ENCODE measurements at regions of chr7 and their contacts with region 1.

Region 1: GRCh38 chr7:120987683-120988590 is 574 bp upstream of the CPED1 start:
- DNase-seq: peak; percentile 77
- H3K4me3 Mint-ChIP-seq: peak overlapping the region; percentile 81
- H3K27ac Mint-ChIP-seq: no peak overlapping the region
- H3K4me1 Mint-ChIP-seq: peaks cover 20% of the 10 kb centered on the region
- H3K27me3 Mint-ChIP-seq: peaks cover 53% of the 10 kb centered on the region

Region 2: DNA sequence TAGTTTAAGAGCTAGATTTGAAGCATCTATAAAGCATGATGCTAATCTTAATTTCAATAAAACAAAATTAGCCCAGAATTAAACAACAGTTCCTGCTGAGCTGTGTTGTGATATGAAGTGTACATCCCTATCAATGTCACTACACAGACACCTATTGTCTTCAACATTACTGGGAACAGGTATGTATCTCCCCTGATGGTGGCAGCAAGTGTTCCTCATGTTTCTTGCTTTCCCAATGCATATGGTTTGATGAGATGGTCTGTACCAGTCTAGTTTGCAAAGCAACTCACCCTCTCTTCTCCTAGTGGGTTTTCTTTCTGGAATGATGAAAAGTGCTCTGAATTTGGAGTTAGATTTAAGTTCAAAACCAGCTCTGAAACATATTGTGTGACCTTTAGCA is 168.1 kb before region 1 on chr7:
- intact Hi-C with region 1: no loop called
- DNase-seq: no peak
- H3K4me3 Mint-ChIP-seq: no peak overlapping the region
- H3K27ac Mint-ChIP-seq: no peak overlapping the region
- H3K4me1 Mint-ChIP-seq: no peaks in the 10 kb centered on the region
- H3K27me3 Mint-ChIP-seq: peaks cover 7% of the 10 kb centered on the region

Region 3: GRCh38 chr7:120950539-120951308 is 37.2 kb before region 1 on chr7 and contains the start of gene ING3:
- intact Hi-C with region 1: loop called (anchors 1 kb)
- DNase-seq: peak; percentile 97
- H3K4me3 Mint-ChIP-seq: peak within 1 kb of the TSS; percentile 87
- H3K27ac Mint-ChIP-seq: peak within 1 kb of the TSS; percentile 92
- H3K4me1 Mint-ChIP-seq: peaks cover 34% of the 10 kb centered on the region
- H3K27me3 Mint-ChIP-seq: peaks cover 10% of the 10 kb centered on the region
- total RNA-seq, gene ING3: 26.7 and 28.6 TPM in 2 replicates

Region 4: DNA sequence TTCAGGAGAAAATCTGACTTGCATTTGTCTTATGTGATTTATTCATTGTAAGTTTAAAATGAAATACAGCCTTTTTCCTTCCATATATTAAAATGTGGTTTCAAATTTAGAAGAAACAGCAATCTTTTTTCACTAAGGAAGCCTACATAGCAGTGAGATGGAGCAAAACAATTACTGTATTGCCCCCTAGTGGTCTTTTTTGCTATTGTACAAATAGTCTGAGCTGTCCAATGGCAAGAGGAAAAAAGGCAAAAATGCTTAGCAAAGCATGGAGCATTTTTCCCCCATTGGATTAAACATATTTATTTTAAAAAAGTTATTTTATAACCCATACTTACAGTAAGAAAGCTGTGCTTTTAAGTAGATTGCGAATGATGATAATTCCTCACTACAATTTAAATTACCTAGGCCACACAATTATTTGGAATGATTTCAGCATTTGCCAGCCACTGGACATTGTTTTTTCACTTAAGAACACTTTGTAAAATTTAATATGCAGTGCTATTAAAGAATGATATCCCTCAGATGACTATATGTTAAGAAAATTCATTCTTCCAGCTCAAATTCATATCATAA is 120.1 kb after region 1 on chr7:
- intact Hi-C with region 1: loop called (anchors 1 kb)
- DNase-seq: no peak
- H3K4me3 Mint-ChIP-seq: no peak overlapping the region
- H3K27ac Mint-ChIP-seq: no peak overlapping the region
- H3K4me1 Mint-ChIP-seq: no peaks in the 10 kb centered on the region
- H3K27me3 Mint-ChIP-seq: peaks cover 10% of the 10 kb centered on the region

Region 5: GRCh38 chr7:121329191-121330052 is 341.5 kb after region 1 on chr7:
- intact Hi-C with region 1: loop called (anchors 5 kb)
- DNase-seq: no peak
- H3K4me3 Mint-ChIP-seq: peak overlapping the region; percentile 68
- H3K27ac Mint-ChIP-seq: no peak overlapping the region
- H3K4me1 Mint-ChIP-seq: peaks cover 21% of the 10 kb centered on the region
- H3K27me3 Mint-ChIP-seq: peaks cover 48% of the 10 kb centered on the region

Region 6: GRCh38 chr7:121547544-121548092 is 559.7 kb after region 1 on chr7:
- intact Hi-C with region 1: loop called (anchors 2 kb)
- DNase-seq: no peak
- H3K4me3 Mint-ChIP-seq: no peak overlapping the region
- H3K27ac Mint-ChIP-seq: no peak overlapping the region
- H3K4me1 Mint-ChIP-seq: peaks cover 39% of the 10 kb centered on the region
- H3K27me3 Mint-ChIP-seq: peaks cover 9% of the 10 kb centered on the region

Measured in activated T-helper 1 cell treated with anti-CD3 and anti-CD28 coated beads, Interleukin-12 subunit alpha, Interleukin-12 subunit beta, Interleukin-2, Interleukin-4 antibody, amounts not matched to agents 30 ng/mL and 10 ng/mL and 1 ng/mL, durations not matched to agents 14 hours and 24 hours and 36 hours (primary cell).